ENCODE measurements at regions of chr9 and their contacts with region 1.

Region 1: GRCh38 chr9:127224178-127224882 is 40.2 kb upstream of the GARNL3 start:
- DNase-seq: peak; percentile 91
- H3K4me3 ChIP-seq: peak overlapping the region; percentile 89
- H3K27ac ChIP-seq: peak overlapping the region; percentile 89
- H3K4me1 ChIP-seq: peaks cover 23% of the 10 kb centered on the region
- H3K27me3 ChIP-seq: no peaks in the 10 kb centered on the region
- CTCF ChIP-seq: peak; percentile 40

Region 2: GRCh38 chr9:127308652-127309429 is 84.5 kb after region 1 on chr9:
- intact Hi-C with region 1: loop called (anchors 10 kb)
- DNase-seq: no peak
- H3K4me3 ChIP-seq: no peak overlapping the region
- H3K27ac ChIP-seq: peak overlapping the region; percentile 64
- H3K4me1 ChIP-seq: peaks cover 49% of the 10 kb centered on the region
- H3K27me3 ChIP-seq: no peaks in the 10 kb centered on the region
- CTCF ChIP-seq: no peak

Region 3: DNA sequence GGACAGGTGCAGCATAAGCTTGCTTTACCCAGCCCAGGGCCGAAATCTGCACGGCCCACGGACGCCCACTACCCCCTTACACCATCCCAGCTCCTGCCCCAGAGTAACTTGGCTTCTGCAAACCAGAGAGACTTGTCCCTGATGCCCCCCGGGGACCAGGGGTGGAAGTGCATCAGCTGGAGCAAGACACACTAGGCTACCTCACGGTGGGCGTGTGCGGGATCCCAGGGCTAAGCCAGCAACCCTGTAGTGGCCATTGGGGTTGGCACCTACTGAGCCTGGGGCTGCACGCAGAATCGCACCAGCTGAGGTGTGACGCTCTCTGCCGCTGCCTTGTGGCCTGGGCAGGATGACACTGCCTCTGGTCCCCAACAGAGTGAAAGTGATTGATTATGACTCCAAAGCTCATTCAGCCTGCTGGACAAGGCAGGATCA is 193.7 kb after region 1 on chr9:
- intact Hi-C with region 1: no loop called
- DNase-seq: no peak
- H3K4me3 ChIP-seq: no peak overlapping the region
- H3K27ac ChIP-seq: no peak overlapping the region
- H3K4me1 ChIP-seq: peaks cover 16% of the 10 kb centered on the region
- H3K27me3 ChIP-seq: no peaks in the 10 kb centered on the region
- CTCF ChIP-seq: peak; percentile 39